Gastrocnemius medialis (tissue), 4 donors: ENCODE measurements at regions of chr11 and their contacts with region 1.

Region 1: GRCh38 chr11:7278314-7278917 is 26.7 kb downstream of the SYT9 start:
- DNase-seq: no peak
- ATAC-seq: no peak
- H3K4me3 ChIP-seq: no peak overlapping the region
- H3K27ac ChIP-seq: no peak overlapping the region
- H3K4me1 ChIP-seq: no peaks in the 10 kb centered on the region
- H3K27me3 ChIP-seq: no peaks in the 10 kb centered on the region
- CTCF ChIP-seq: peak in 1 of 5 experiments; percentile 44
- POLR2A ChIP-seq: no peak

Region 2: DNA sequence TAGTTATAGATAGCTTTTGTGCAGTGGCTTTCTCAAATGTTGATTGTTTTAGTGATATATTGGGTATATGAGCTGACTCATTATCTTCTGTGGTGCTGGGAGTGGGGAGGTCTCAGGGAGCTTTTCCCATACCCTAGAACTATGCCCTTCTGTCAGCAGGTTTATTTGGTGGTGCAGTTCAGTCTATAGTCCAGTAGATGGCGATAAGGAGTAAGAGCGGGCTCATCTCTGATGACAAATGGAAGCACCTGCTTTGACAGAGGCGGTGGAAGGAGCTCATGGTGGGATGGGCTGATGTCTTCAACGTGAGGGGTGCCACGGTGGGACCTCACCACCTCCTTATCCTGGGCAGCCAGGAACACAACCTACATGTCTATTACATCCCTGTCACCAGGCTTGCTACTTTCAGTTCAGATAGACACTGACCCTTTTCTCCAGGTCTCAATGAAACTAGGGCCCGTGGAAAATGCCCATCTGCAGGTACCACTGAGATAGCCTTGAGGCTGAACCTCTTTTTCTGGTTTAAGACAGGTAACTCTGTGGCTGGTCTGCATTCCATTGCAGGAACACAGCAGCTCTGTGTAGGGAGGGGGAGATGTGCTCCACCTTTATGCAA is 465.9 kb before region 1 on chr11:
- in situ Hi-C with region 1: no loop called
- intact Hi-C with region 1: loop called (anchors 10 kb)
- DNase-seq: no peak
- ATAC-seq: no peak
- H3K4me3 ChIP-seq: no peak overlapping the region
- H3K27ac ChIP-seq: no peak overlapping the region
- H3K4me1 ChIP-seq: no peaks in the 10 kb centered on the region
- H3K27me3 ChIP-seq: no peaks in the 10 kb centered on the region
- CTCF ChIP-seq: peak; percentile 20 to 79 (median 61)
- POLR2A ChIP-seq: no peak

Region 3: GRCh38 chr11:7381937-7382336 is 103.5 kb after region 1 on chr11:
- in situ Hi-C with region 1: loop called in 1 of 4 experiments (anchors 25 kb)
- intact Hi-C with region 1: no loop called
- DNase-seq: no peak
- ATAC-seq: no peak
- H3K4me3 ChIP-seq: no peak overlapping the region
- H3K27ac ChIP-seq: no peak overlapping the region
- H3K4me1 ChIP-seq: no peaks in the 10 kb centered on the region
- H3K27me3 ChIP-seq: no peaks in the 10 kb centered on the region
- CTCF ChIP-seq: no peak
- POLR2A ChIP-seq: no peak